B cell (primary cell): ENCODE measurements at regions of chr19 and their contacts with region 1.

Region 1: DNA sequence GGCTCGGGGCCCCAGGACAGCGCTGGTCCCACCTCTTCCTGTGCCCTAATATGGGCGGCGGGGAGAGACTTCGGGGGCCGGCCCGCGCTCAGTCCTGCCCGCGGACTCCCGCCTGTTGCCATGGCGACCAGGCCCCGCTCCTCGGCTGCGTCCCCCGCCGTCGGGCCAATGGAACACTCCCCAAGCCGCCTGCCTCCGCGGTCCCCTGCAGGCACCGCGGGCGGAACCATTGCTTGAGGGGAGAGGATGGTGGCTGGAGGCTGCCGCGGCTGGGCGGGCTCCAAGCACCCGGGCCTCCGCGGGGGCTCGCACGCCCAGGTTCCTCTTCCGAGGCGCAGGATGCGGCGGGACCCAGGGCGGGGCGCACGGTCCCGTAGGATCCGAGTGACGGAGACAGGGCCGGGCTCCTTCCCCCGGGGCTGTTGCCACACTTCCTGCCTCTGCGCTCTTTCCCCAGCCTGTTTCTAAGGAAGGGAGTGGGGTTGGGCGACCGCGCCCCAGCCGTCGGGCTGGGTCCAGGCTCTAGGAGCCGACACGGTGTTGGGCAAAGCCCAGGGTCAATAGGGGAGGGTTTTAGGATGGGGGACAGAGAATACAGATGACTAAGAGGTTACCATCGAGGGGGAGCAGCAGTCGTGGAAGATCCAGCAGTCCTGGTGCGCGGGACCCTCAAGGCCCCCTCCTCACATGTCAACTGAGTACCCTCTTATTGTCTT is 1.2 kb upstream of the JUNB start:
- DNase-seq: peak; percentile 99
- ATAC-seq: peak; percentile 46
- H3K4me3 ChIP-seq: peak overlapping the region; percentile 94 to 99 (median 97)
- H3K4me3 Mint-ChIP-seq: peak overlapping the region; percentile 97
- H3K27ac ChIP-seq: peak overlapping the region; percentile 95 to 97
- H3K27ac Mint-ChIP-seq: peak overlapping the region; percentile 99
- H3K4me1 ChIP-seq: peaks cover 52 to 64% of the 10 kb centered on the region in 2 donors
- H3K4me1 Mint-ChIP-seq: peaks cover 41% of the 10 kb centered on the region
- H3K27me3 ChIP-seq: no peaks in the 10 kb centered on the region
- H3K27me3 Mint-ChIP-seq: no peaks in the 10 kb centered on the region
- CTCF ChIP-seq: no peak

Region 2: DNA sequence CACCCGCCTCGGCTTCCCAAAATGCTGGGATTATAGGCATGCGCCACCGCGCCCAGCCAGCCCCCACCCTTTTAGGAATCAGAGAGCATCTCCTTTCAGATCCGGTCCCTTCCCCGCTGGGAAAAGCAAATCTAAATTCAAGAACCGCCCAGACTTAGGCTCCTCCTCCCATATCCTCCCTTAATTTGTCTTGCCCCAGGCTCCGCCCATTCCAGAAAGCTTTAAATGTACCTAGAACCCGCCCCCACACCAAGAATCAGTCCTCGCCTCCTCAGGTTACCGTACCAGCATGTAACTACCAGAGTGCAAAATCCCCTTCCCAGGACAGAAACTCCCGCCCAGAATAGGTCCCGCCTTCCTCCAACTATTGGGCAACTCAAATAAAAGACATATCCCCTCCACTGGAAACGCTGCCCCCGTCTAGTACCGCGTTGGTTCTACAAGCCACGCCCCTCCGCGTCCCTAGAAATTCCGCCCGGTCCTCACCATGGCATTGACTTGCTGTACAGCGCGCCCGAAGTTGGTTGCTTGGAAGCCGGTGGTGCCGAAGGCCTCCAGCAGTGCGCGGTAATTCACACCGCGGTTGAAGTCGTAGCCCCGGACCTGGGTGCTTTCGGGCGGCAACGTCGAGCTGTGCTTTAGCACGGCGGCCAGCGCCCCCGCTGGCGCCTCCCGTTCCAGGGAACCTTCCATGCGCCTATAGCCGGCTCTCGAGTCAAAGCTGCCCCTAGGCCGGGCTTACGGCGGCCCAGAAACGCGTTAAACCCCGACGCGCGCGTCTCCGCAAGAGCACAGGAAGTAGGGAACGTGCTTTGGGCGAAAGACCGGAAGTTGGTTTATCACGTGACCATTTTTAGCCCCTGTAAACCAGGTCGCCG is 108.7 kb before region 1 on chr19 and contains the start of gene DHPS:
- CTCF ChIA-PET with region 1: no interaction called
- POLR2A ChIA-PET with region 1: interaction called, 12 read pairs
- intact Hi-C with region 1: no loop called
- DNase-seq: peak; percentile 98
- ATAC-seq: peak; percentile 75
- H3K4me3 ChIP-seq: peak within 1 kb of the TSS; percentile 73 to 90 (median 86)
- H3K4me3 Mint-ChIP-seq: peak within 1 kb of the TSS; percentile 93
- H3K27ac ChIP-seq: peak within 1 kb of the TSS; percentile 89 to 95
- H3K27ac Mint-ChIP-seq: peak within 1 kb of the TSS; percentile 94
- H3K4me1 ChIP-seq: peaks cover 9 to 17% of the 10 kb centered on the region in 2 donors
- H3K4me1 Mint-ChIP-seq: peaks cover 24% of the 10 kb centered on the region
- H3K27me3 ChIP-seq: no peaks in the 10 kb centered on the region
- H3K27me3 Mint-ChIP-seq: no peaks in the 10 kb centered on the region
- CTCF ChIP-seq: no peak
- total RNA-seq, gene DHPS: 187 and 200 TPM in 2 replicates

Region 3: GRCh38 chr19:12806239-12807081 is 16.4 kb after region 1 on chr19 and contains the start of gene RNASEH2A:
- CTCF ChIA-PET with region 1: interaction called, 6 read pairs
- POLR2A ChIA-PET with region 1: interaction called, 10 read pairs
- intact Hi-C with region 1: no loop called
- DNase-seq: peak; percentile 93
- ATAC-seq: peak; percentile 95
- H3K4me3 ChIP-seq: peak within 1 kb of the TSS; percentile 51 to 82 (median 73)
- H3K4me3 Mint-ChIP-seq: peak within 1 kb of the TSS; percentile 96
- H3K27ac ChIP-seq: peak within 1 kb of the TSS; percentile 36 to 61
- H3K27ac Mint-ChIP-seq: peak within 1 kb of the TSS; percentile 87
- H3K4me1 ChIP-seq: peaks cover 14 to 23% of the 10 kb centered on the region in 2 donors
- H3K4me1 Mint-ChIP-seq: peaks cover 25% of the 10 kb centered on the region
- H3K27me3 ChIP-seq: no peaks in the 10 kb centered on the region
- H3K27me3 Mint-ChIP-seq: peaks cover 3% of the 10 kb centered on the region
- CTCF ChIP-seq: no peak
- total RNA-seq, gene RNASEH2A: 16.9 and 18.9 TPM in 2 replicates

Region 4: GRCh38 chr19:12872941-12873890 is 83.2 kb after region 1 on chr19:
- CTCF ChIA-PET with region 1: no interaction called
- POLR2A ChIA-PET with region 1: no interaction called
- intact Hi-C with region 1: no loop called
- DNase-seq: peak; percentile 69
- ATAC-seq: peak; percentile 72
- H3K4me3 ChIP-seq: peak overlapping the region in 2 of 5 experiments; percentile 34
- H3K4me3 Mint-ChIP-seq: peak overlapping the region; percentile 34
- H3K27ac ChIP-seq: no peak overlapping the region
- H3K27ac Mint-ChIP-seq: no peak overlapping the region
- H3K4me1 ChIP-seq: no peaks in the 10 kb centered on the region
- H3K4me1 Mint-ChIP-seq: no peaks in the 10 kb centered on the region
- H3K27me3 ChIP-seq: no peaks in the 10 kb centered on the region
- H3K27me3 Mint-ChIP-seq: no peaks in the 10 kb centered on the region
- CTCF ChIP-seq: no peak

Region 5: DNA sequence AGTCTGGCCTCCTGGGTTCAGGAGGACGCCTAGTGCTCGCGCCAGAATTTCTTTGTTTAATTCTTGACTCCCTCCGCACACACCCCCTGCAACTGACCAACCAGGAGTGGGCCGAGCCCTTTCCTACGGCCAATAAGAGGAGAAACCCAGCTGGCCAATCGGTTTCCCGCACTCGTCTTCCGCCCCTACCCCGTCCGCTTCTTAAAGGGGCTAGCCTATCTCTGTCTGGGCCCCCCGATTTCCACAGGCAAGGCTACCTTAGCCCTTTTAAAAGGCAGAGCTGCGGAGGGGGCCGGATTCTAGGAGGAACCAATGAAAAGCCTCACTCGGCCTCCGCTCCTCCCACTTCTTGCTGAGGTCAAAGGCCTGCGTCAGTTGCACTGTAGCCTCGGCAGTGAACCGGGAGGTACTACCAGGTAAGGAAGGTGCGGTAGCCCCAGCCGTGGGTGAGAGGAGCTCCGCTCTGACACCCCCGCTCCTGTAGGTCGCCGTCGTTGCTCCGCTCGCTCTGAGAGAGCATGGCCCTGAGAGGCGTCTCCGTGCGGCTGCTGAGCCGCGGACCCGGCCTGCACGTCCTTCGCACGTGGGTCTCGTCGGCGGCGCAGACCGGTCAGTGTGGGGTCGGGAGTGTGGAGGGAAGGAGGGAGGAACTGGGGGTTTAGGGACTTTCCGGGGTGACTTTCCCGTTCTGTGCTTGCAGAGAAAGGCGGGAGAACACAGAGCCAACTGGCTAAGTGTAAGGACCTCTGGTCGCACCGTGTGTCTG is 100.9 kb after region 1 on chr19 and contains the start of gene GCDH:
- CTCF ChIA-PET with region 1: no interaction called
- POLR2A ChIA-PET with region 1: interaction called, 10 read pairs
- intact Hi-C with region 1: no loop called
- DNase-seq: peak; percentile 98
- ATAC-seq: peak; percentile 91
- H3K4me3 ChIP-seq: peak within 1 kb of the TSS; percentile 51 to 92 (median 78)
- H3K4me3 Mint-ChIP-seq: peak within 1 kb of the TSS; percentile 99
- H3K27ac ChIP-seq: peak within 1 kb of the TSS; percentile 80 to 83
- H3K27ac Mint-ChIP-seq: peak within 1 kb of the TSS; percentile 95
- H3K4me1 ChIP-seq: peaks cover 15 to 20% of the 10 kb centered on the region in 2 donors
- H3K4me1 Mint-ChIP-seq: peaks cover 31% of the 10 kb centered on the region
- H3K27me3 ChIP-seq: no peaks in the 10 kb centered on the region
- H3K27me3 Mint-ChIP-seq: no peaks in the 10 kb centered on the region
- CTCF ChIP-seq: no peak
- total RNA-seq, gene GCDH: 61.2 and 63.2 TPM in 2 replicates